ENCODE measurements at regions of chr7 and their contacts with region 1.

Region 1: GRCh38 chr7:101138213-101138870 is 11.4 kb downstream of the SERPINE1 start:
- DNase-seq: no peak
- ATAC-seq: peak; percentile 83

Region 2: GRCh38 chr7:101094416-101095375 is 43.6 kb before region 1 on chr7:
- intact Hi-C with region 1: loop called (anchors 1 kb)
- DNase-seq: no peak
- ATAC-seq: peak; percentile 15

Region 3: GRCh38 chr7:101567230-101567629 is 428.9 kb after region 1 on chr7:
- intact Hi-C with region 1: no loop called
- DNase-seq: no peak
- ATAC-seq: no peak

Measured in Right ventricle myocardium inferior (tissue), 1 donor.